Stomach (tissue), 19 donors: ENCODE measurements at regions of chr9 and their contacts with region 1.

Region 1: DNA sequence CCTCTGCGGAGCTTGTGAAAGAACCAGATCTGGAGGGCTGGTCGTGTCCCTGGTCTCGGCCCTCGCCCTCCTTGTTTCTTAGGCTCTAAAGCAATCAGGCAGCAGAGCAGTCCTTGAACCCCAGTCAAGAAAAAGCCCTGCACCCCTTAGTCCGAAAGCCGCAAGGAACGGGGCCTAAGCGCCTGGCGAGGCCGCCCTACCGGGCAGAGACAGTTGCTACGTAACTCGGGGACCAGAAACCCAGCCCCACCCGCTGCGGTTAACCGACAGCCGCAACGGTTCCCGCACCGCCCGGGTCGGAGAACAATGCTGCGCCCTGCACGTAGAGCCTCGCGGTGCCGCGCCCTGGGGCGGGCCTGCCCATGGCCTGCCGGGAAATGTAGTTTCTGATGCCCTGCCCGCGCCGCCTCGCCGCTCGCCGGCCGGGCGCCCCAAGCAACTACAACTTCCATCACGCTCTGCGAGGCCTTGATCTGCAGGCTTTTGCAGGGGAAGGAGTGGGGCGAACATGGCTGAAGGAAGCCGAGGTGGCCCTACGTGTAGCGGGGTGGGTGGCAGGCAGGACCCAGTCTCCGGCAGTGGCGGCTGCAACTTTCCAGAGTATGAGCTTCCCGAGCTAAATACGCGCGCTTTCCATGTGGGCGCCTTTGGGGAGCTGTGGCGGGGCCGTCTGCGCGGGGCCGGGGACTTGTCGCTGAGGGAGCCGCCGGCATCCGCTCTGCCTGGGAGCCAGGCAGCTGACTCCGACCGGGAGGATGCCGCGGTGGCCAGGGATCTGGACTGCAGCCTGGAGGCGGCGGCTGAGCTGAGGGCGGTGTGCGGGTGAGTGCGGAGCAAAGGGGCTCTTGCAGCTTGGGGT is at the start of gene SNAPC3:
- DNase-seq: peak; percentile 94 to 99
- H3K4me3 ChIP-seq: peak within 1 kb of the TSS; percentile 88 to 98 (median 94)
- H3K27ac ChIP-seq: peak within 1 kb of the TSS; percentile 89 to 94 (median 91)
- H3K4me1 ChIP-seq: peaks cover 9 to 54% (median 34%) of the 10 kb centered on the region in 4 donors
- H3K27me3 ChIP-seq: no peaks in the 10 kb centered on the region
- CTCF ChIP-seq: no peak
- EP300 ChIP-seq: no peak
- POLR2A ChIP-seq: peak in 2 of 4 donors; percentile 37 to 47
- total RNA-seq, gene SNAPC3: 18.7 to 217 (median 60.8) TPM

Region 2: GRCh38 chr9:15306757-15307534 is 115.7 kb before region 1 on chr9 and contains the start of gene TTC39B:
- intact Hi-C with region 1: loop called (anchors 10 kb)
- DNase-seq: peak; percentile 96 to 98
- H3K4me3 ChIP-seq: peak within 1 kb of the TSS; percentile 84 to 95 (median 92)
- H3K27ac ChIP-seq: peak within 1 kb of the TSS; percentile 91 to 97 (median 93)
- H3K4me1 ChIP-seq: peaks cover 10 to 36% (median 21%) of the 10 kb centered on the region in 4 donors
- H3K27me3 ChIP-seq: no peaks in the 10 kb centered on the region
- CTCF ChIP-seq: peak in 1 of 7 experiments; percentile 17
- EP300 ChIP-seq: no peak
- POLR2A ChIP-seq: peak in 1 of 4 donors; percentile 77
- total RNA-seq, gene TTC39B: 4.7 to 35.4 (median 14.2) TPM

Region 3: DNA sequence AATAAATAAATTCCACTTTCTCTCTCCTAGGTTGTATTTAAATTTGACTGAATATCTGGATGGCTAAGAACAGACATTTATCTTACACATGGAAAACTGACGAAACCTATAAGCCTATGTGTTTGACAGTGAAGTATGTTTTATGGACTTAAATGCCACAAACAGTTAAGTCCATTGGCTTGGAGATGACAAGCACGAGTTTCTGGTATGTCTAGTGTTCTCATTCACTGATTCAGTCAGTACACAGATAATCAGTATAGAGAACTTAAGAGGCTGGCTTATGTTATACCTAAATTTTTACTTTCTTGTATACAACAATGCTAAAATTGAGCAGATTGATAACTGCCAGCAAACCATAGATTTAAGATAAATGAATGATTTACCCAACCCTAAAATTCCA is 39.0 kb after region 1 on chr9:
- intact Hi-C with region 1: no loop called
- DNase-seq: no peak
- H3K4me3 ChIP-seq: no peak overlapping the region
- H3K27ac ChIP-seq: no peak overlapping the region
- H3K4me1 ChIP-seq: peaks cover 0 to 10% (median 3%) of the 10 kb centered on the region in 4 donors
- H3K27me3 ChIP-seq: no peaks in the 10 kb centered on the region
- CTCF ChIP-seq: no peak
- EP300 ChIP-seq: no peak
- POLR2A ChIP-seq: no peak

Region 4: GRCh38 chr9:15635752-15636151 is 213.2 kb after region 1 on chr9:
- intact Hi-C with region 1: no loop called
- DNase-seq: no peak
- H3K4me3 ChIP-seq: no peak overlapping the region
- H3K27ac ChIP-seq: no peak overlapping the region
- H3K4me1 ChIP-seq: no peaks in the 10 kb centered on the region
- H3K27me3 ChIP-seq: no peaks in the 10 kb centered on the region
- CTCF ChIP-seq: no peak
- EP300 ChIP-seq: no peak
- POLR2A ChIP-seq: no peak